ENCODE measurements at regions of chr16 and their contacts with region 1.

Region 1: GRCh38 chr16:35305476-35305875 is 1846.1 kb downstream of the TP53TG3F start:
- DNase-seq: no peak
- ATAC-seq: no peak
- H3K4me3 ChIP-seq: no peak overlapping the region
- H3K27ac ChIP-seq: no peak overlapping the region
- H3K4me1 ChIP-seq: no peaks in the 10 kb centered on the region
- H3K27me3 ChIP-seq: no peaks in the 10 kb centered on the region
- CTCF ChIP-seq: no peak
- POLR2A ChIP-seq: no peak

Region 2: DNA sequence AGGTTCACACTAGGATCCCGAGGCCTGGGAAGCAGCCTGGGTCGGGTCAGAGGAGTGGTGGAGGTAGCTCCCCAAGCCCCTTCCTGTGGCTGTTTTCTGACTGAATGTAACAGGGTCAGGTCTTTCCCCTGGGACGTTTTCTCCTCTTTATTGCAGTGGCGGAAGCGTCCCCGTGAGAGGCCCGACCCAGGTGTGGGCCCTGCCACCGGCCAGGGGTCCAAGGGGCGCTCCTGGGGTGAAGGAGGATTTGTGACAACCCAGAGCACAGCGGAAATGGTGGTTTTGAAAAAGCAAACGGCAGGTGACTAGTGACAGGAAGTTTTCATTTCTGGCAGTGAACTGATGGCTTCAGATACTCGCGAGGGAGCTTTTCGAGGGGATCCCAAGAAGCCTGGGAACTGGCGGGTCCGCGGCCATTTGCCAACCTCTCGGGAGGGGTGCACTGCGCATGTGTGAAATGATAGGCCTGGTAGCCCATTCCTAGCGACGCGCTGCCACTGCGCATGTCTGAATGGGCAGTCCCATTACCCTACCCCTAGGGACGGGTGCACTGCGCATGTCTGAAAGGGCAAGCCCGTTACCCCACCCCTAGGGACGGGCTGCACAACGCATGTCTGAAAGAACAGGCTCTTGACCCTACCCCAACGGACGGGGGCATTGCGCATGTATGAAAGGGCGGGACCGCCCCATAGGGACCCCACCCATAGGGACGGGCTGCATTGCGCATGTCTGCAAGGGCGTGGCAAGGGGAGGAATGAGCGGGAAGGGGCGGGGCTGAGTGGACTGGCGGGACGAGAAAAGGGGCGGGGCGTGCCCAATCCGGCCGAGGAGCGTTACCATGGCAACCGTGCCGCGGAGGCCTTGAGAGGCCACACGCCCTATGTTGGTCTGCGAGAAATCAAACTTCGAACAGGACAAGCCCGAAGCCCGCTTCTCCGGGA is 98.1 kb before region 1 on chr16:
- in situ Hi-C with region 1: loop called in 1 of 4 experiments (anchors 25 kb)
- intact Hi-C with region 1: no loop called
- DNase-seq: no peak
- ATAC-seq: no peak
- H3K4me3 ChIP-seq: no peak overlapping the region
- H3K27ac ChIP-seq: no peak overlapping the region
- H3K4me1 ChIP-seq: no peaks in the 10 kb centered on the region
- H3K27me3 ChIP-seq: no peaks in the 10 kb centered on the region
- CTCF ChIP-seq: no peak
- POLR2A ChIP-seq: no peak

Region 3: GRCh38 chr16:35365675-35366074 is 60.2 kb after region 1 on chr16:
- in situ Hi-C with region 1: no loop called
- intact Hi-C with region 1: no loop called
- DNase-seq: peak in 1 of 2 donors; percentile 37
- ATAC-seq: no peak
- H3K4me3 ChIP-seq: no peak overlapping the region
- H3K27ac ChIP-seq: peak overlapping the region in 1 of 4 donors; percentile 43
- H3K4me1 ChIP-seq: no peaks in the 10 kb centered on the region
- H3K27me3 ChIP-seq: no peaks in the 10 kb centered on the region
- CTCF ChIP-seq: no peak
- POLR2A ChIP-seq: no peak

Region 4: DNA sequence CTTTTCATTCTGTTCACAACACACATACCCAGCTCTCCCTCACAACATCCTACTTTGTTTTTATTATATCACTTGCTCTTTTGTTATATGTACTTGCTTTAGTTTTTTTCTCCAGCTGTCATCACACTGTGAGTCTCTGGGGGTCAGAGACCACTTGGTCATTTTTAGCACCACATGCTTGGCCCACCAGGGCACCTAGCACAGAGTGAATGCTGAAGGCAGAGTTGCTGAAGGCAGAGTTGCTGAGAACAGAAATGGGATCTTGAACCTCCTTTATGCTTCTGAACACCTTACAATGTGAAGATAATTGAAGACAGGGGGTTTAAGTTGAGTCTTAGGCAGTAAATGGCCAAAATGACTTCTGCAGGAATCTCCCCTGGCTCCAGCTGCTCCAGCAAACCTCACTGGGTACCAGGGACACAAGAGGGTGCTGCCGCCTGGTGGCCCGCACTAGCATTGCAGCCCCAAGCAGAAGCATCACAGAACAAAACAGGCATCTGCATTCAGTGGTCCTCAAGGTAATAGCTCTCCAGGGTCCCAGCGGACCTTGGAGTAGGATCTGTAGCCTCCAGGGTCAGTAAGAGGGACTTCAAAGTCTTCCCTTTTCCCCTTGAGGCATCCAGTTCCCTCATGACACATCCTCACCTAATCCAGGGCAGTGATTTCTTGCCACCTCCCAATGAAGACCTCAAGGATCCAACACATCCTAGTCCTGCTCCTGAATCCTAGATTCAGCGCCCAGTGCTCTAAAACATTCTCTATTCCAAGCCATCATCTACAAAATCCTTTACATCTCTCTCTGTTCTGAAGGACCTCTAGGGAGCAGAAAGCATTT is 126.6 kb after region 1 on chr16:
- in situ Hi-C with region 1: loop called in 1 of 4 experiments (anchors 25 kb)
- intact Hi-C with region 1: no loop called
- DNase-seq: no peak
- ATAC-seq: no peak
- H3K4me3 ChIP-seq: no peak overlapping the region
- H3K27ac ChIP-seq: no peak overlapping the region
- H3K4me1 ChIP-seq: no peaks in the 10 kb centered on the region
- H3K27me3 ChIP-seq: no peaks in the 10 kb centered on the region
- CTCF ChIP-seq: peak; percentile 15 to 59 (median 35)
- POLR2A ChIP-seq: no peak